ENCODE measurements at regions of chr19 and their contacts with region 1.

Region 1: GRCh38 chr19:17292286-17293097 is 10.7 kb downstream of the ABHD8 start:
- DNase-seq: peak; percentile 69
- H3K4me3 Mint-ChIP-seq: peak overlapping the region; percentile 85
- H3K27ac Mint-ChIP-seq: peak overlapping the region; percentile 87
- H3K4me1 Mint-ChIP-seq: no peaks in the 10 kb centered on the region
- H3K27me3 Mint-ChIP-seq: no peaks in the 10 kb centered on the region

Region 2: GRCh38 chr19:17245244-17245984 is 47.1 kb before region 1 on chr19 and contains the start of gene NR2F6:
- intact Hi-C with region 1: loop called (anchors 5 kb)
- DNase-seq: no peak
- H3K4me3 Mint-ChIP-seq: peak within 1 kb of the TSS; percentile 87
- H3K27ac Mint-ChIP-seq: peak within 1 kb of the TSS; percentile 77
- H3K4me1 Mint-ChIP-seq: no peaks in the 10 kb centered on the region
- H3K27me3 Mint-ChIP-seq: peaks cover 14% of the 10 kb centered on the region
- total RNA-seq, gene NR2F6: 14.3 and 14.4 TPM in 2 replicates

Region 3: DNA sequence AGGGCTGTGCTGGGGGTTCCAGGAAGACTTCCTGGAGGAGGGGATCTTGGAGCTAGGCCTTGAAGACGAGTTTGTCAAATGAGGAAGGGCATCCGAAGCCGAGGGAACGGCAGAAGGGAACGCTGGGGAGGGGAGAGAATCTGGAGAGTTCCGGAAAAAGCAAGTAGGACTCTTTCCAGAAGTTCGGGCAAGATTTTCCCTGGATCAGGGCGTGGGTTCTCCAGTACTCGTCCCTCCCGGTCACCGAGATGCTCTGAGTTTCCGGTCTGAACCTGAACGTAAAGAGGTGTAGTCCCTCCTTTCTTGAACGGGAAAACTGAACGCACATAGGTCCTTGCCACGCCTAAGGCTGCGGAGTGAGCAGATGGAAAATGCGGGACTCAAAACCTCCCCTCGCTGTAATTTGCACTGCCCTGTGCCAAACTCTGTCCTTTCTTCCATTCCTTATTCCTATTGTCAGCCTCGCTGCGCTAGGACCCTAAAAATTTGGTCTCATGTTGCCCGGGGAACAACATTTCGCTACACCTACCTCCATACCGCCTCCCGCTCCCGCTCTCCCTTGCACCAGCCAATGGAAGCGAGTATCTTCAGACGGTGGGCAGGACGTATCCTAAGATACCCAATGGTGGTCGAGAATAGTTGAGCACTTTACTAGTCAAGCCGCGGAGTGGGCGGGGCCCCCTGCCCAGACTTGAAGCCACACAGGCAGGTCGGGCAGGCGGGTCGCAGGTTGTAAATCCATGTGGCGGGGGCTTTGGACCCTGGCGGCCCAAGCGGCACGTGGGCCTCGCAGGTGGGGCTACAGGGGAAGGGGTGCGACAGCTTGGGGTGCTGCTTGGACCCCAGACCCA is 44.6 kb after region 1 on chr19 and contains the start of gene GTPBP3:
- intact Hi-C with region 1: loop called (anchors 1 kb)
- DNase-seq: peak; percentile 95
- H3K4me3 Mint-ChIP-seq: peak within 1 kb of the TSS; percentile 87
- H3K27ac Mint-ChIP-seq: peak within 1 kb of the TSS; percentile 88
- H3K4me1 Mint-ChIP-seq: peaks cover 21% of the 10 kb centered on the region
- H3K27me3 Mint-ChIP-seq: peaks cover 2% of the 10 kb centered on the region
- total RNA-seq, gene GTPBP3: 64.2 and 72.0 TPM in 2 replicates

Region 4: GRCh38 chr19:17390665-17391370 is 98.3 kb after region 1 on chr19:
- intact Hi-C with region 1: loop called (anchors 1 kb)
- DNase-seq: peak; percentile 88
- H3K4me3 Mint-ChIP-seq: peak overlapping the region; percentile 90
- H3K27ac Mint-ChIP-seq: peak overlapping the region; percentile 29
- H3K4me1 Mint-ChIP-seq: peaks cover 20% of the 10 kb centered on the region
- H3K27me3 Mint-ChIP-seq: peaks cover 21% of the 10 kb centered on the region

Region 5: DNA sequence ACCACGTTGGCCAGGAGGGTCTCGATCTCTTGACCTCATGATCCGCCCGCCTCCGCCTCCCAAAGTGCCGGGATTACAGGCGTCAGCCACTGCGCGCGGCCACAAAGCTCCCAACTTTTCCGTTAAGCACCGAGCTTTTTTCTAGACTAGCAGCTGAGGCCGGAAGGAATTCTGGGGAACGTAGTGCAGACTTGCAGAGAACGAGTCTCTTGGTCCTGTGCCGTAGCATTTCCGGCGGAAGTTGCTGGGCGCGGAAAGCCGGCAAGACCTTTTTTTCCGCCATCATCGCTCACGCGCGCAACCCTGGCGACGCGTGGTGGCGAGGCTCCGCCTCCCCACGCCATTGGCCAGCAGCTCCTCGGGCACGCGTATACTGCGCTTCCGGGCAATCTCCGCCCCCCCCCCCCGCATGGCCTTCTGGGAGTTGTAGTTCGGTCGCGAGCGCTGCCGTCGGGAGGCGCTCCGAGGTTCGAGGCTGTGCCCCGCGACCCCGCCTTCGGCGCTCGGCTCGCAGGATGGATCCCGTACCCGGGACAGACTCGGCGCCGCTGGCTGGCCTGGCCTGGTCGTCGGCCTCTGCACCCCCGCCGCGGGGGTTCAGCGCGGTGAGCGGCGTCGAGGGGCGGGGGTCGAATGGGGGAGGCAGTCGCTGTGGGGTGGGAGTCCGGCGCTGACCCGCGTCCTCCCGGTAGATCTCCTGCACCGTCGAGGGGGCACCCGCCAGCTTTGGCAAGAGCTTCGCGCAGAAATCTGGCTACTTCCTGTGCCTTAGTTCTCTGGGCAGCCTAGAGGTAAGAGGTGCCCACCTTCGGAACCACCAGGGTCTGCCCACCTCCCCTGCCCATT is 127.4 kb after region 1 on chr19 and contains the start of gene MVB12A:
- intact Hi-C with region 1: loop called (anchors 1 kb)
- DNase-seq: peak; percentile 95
- H3K4me3 Mint-ChIP-seq: peak within 1 kb of the TSS; percentile 94
- H3K27ac Mint-ChIP-seq: peak within 1 kb of the TSS; percentile 94
- H3K4me1 Mint-ChIP-seq: peaks cover 17% of the 10 kb centered on the region
- H3K27me3 Mint-ChIP-seq: no peaks in the 10 kb centered on the region
- total RNA-seq, gene MVB12A: 40.8 and 42.7 TPM in 2 replicates